B cell (primary cell): ENCODE measurements at regions of chr2 and their contacts with region 1.

Region 1: GRCh38 chr2:42095923-42096408 is 48.1 kb downstream of the PKDCC start:
- DNase-seq: peak; percentile 83
- ATAC-seq: peak; percentile 39
- H3K4me3 ChIP-seq: no peak overlapping the region
- H3K4me3 Mint-ChIP-seq: no peak overlapping the region
- H3K27ac ChIP-seq: no peak overlapping the region
- H3K27ac Mint-ChIP-seq: no peak overlapping the region
- H3K4me1 ChIP-seq: peaks cover 50 to 54% of the 10 kb centered on the region in 2 donors
- H3K4me1 Mint-ChIP-seq: peaks cover 46% of the 10 kb centered on the region
- H3K27me3 ChIP-seq: peaks cover 0 to 4% (median 0%) of the 10 kb centered on the region in 4 experiments
- H3K27me3 Mint-ChIP-seq: no peaks in the 10 kb centered on the region
- CTCF ChIP-seq: peak; percentile 93

Region 2: DNA sequence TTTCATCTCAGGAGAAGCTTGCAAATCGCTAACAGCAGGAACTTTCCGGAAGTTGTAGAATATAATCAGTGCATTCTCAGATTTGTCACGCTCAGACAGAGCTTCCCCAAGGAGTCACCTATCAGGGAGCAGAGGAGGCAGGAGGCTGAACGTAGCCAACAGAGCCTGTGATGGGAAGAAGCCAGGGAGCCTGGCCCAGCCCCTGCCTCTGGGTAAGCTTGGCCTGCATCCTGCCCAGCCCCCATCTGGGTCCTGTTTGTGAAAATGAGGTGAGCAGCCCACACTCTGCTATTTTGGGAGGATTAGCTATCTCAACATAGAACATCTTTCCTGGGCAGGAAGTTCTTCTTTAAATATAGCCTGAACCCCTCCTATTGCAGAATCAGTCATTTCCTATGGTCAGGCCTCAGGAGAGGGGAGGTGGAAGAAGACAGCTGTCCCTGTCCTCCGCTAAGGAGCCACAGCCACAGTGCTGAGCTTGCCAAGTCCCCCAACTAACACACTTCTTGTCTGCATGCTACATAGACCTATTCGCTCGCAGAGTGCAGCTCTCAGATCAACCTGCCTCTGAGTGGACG is 67.3 kb before region 1 on chr2:
- CTCF ChIA-PET with region 1: no interaction called
- POLR2A ChIA-PET with region 1: no interaction called
- intact Hi-C with region 1: no loop called
- DNase-seq: no peak
- ATAC-seq: no peak
- H3K4me3 ChIP-seq: no peak overlapping the region
- H3K4me3 Mint-ChIP-seq: no peak overlapping the region
- H3K27ac ChIP-seq: no peak overlapping the region
- H3K27ac Mint-ChIP-seq: no peak overlapping the region
- H3K4me1 ChIP-seq: peaks cover 13 to 29% of the 10 kb centered on the region in 2 donors
- H3K4me1 Mint-ChIP-seq: peaks cover 23% of the 10 kb centered on the region
- H3K27me3 ChIP-seq: peaks cover 0 to 7% (median 0%) of the 10 kb centered on the region in 4 experiments
- H3K27me3 Mint-ChIP-seq: peaks cover 19% of the 10 kb centered on the region
- CTCF ChIP-seq: no peak

Region 3: GRCh38 chr2:42117923-42118753 is 22.2 kb after region 1 on chr2:
- CTCF ChIA-PET with region 1: interaction called, 25 read pairs
- POLR2A ChIA-PET with region 1: no interaction called
- intact Hi-C with region 1: no loop called
- DNase-seq: peak; percentile 83
- ATAC-seq: peak; percentile 87
- H3K4me3 ChIP-seq: peak overlapping the region in 3 of 5 experiments; percentile 7 to 16 (median 11)
- H3K4me3 Mint-ChIP-seq: peak overlapping the region; percentile 40
- H3K27ac ChIP-seq: peak overlapping the region; percentile 62 to 75
- H3K27ac Mint-ChIP-seq: peak overlapping the region; percentile 69
- H3K4me1 ChIP-seq: peaks cover 48% of the 10 kb centered on the region in 2 donors
- H3K4me1 Mint-ChIP-seq: peaks cover 61% of the 10 kb centered on the region
- H3K27me3 ChIP-seq: no peaks in the 10 kb centered on the region
- H3K27me3 Mint-ChIP-seq: no peaks in the 10 kb centered on the region
- CTCF ChIP-seq: no peak

Region 4: GRCh38 chr2:42132966-42133641 is 37.1 kb after region 1 on chr2:
- CTCF ChIA-PET with region 1: interaction called, 21 read pairs
- POLR2A ChIA-PET with region 1: interaction called, 6 read pairs
- intact Hi-C with region 1: loop called (anchors 1 kb)
- DNase-seq: peak; percentile 89
- ATAC-seq: peak; percentile 90
- H3K4me3 ChIP-seq: peak overlapping the region in 4 of 5 experiments; percentile 2 to 36 (median 15)
- H3K4me3 Mint-ChIP-seq: peak overlapping the region; percentile 81
- H3K27ac ChIP-seq: peak overlapping the region; percentile 71 to 73
- H3K27ac Mint-ChIP-seq: peak overlapping the region; percentile 94
- H3K4me1 ChIP-seq: peaks cover 71% of the 10 kb centered on the region in 2 donors
- H3K4me1 Mint-ChIP-seq: peaks cover 74% of the 10 kb centered on the region
- H3K27me3 ChIP-seq: no peaks in the 10 kb centered on the region
- H3K27me3 Mint-ChIP-seq: no peaks in the 10 kb centered on the region
- CTCF ChIP-seq: no peak

Region 5: GRCh38 chr2:42183775-42184174 is 87.8 kb after region 1 on chr2:
- CTCF ChIA-PET with region 1: interaction called, 23 read pairs
- POLR2A ChIA-PET with region 1: no interaction called
- intact Hi-C with region 1: no loop called
- DNase-seq: no peak
- ATAC-seq: peak; percentile 41
- H3K4me3 ChIP-seq: peak overlapping the region in 1 of 5 experiments; percentile 7
- H3K4me3 Mint-ChIP-seq: peak overlapping the region; percentile 29
- H3K27ac ChIP-seq: peak overlapping the region in 1 of 2 donors; percentile 68
- H3K27ac Mint-ChIP-seq: peak overlapping the region; percentile 63
- H3K4me1 ChIP-seq: peaks cover 34 to 52% of the 10 kb centered on the region in 2 donors
- H3K4me1 Mint-ChIP-seq: peaks cover 67% of the 10 kb centered on the region
- H3K27me3 ChIP-seq: no peaks in the 10 kb centered on the region
- H3K27me3 Mint-ChIP-seq: no peaks in the 10 kb centered on the region
- CTCF ChIP-seq: no peak

Region 6: GRCh38 chr2:42196403-42197267 is 100.7 kb after region 1 on chr2:
- CTCF ChIA-PET with region 1: interaction called, 102 read pairs
- POLR2A ChIA-PET with region 1: interaction called, 4 read pairs
- intact Hi-C with region 1: loop called (anchors 1 kb)
- DNase-seq: peak; percentile 76
- ATAC-seq: peak; percentile 85
- H3K4me3 ChIP-seq: no peak overlapping the region
- H3K4me3 Mint-ChIP-seq: no peak overlapping the region
- H3K27ac ChIP-seq: peak overlapping the region in 1 of 2 donors; percentile 32
- H3K27ac Mint-ChIP-seq: peak overlapping the region; percentile 77
- H3K4me1 ChIP-seq: peaks cover 35 to 46% of the 10 kb centered on the region in 2 donors
- H3K4me1 Mint-ChIP-seq: peaks cover 65% of the 10 kb centered on the region
- H3K27me3 ChIP-seq: no peaks in the 10 kb centered on the region
- H3K27me3 Mint-ChIP-seq: no peaks in the 10 kb centered on the region
- CTCF ChIP-seq: peak; percentile 76

Region 7: DNA sequence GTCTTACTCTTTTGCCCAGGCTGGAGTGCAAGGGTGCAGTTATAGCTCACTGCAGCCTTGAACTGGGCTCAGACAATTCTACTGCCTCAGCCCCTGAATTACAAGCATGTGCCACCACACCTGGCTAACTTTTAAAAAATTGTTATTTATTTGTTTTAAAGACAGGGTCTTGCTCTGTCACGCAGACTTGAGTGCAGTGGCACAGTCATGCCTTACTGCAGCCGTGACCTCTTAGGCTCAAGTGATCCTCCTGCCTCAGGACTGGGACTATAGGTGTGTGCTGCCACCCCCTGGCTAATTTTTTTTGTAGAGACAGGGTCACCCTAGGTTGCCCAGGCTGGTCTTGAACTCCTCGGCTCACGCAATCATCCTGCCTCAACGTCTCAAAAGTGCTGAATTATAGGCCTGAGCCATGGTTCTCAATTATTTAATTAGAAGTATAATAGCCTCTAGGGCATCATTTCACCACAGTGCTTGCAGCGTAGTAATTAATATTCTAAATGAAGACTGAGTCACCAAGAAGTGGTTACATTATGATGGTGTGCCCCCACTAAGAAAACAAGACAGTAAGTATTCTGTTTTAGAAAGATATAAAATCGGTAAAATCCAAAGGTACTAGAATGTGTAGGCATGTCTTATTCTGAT is 142.8 kb after region 1 on chr2:
- CTCF ChIA-PET with region 1: interaction called, 81 read pairs
- POLR2A ChIA-PET with region 1: no interaction called
- intact Hi-C with region 1: loop called (anchors 1 kb)
- DNase-seq: peak; percentile 58
- ATAC-seq: peak; percentile 84
- H3K4me3 ChIP-seq: no peak overlapping the region
- H3K4me3 Mint-ChIP-seq: no peak overlapping the region
- H3K27ac ChIP-seq: no peak overlapping the region
- H3K27ac Mint-ChIP-seq: no peak overlapping the region
- H3K4me1 ChIP-seq: peaks cover 26 to 27% of the 10 kb centered on the region in 2 donors
- H3K4me1 Mint-ChIP-seq: peaks cover 73% of the 10 kb centered on the region
- H3K27me3 ChIP-seq: no peaks in the 10 kb centered on the region
- H3K27me3 Mint-ChIP-seq: no peaks in the 10 kb centered on the region
- CTCF ChIP-seq: peak; percentile 23

Region 8: DNA sequence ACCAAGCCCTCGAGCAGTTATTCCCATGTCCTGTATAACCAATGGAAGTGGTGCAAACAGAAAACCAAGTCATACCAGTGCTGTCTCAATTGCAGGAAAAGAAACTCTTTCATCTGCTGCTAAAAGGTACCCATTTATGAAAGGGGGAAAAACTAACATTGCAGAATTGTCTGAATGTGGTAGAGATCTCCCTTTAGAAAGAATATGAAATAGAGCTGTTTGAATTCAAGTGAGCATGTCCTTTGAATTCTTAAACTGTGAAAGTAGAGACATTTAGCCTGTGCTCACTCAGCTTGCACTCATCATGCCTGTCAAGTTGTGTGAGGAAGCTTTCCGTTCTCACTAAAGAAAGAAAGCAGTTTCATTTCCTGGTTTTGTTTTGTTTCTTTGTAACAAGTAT is 160.5 kb after region 1 on chr2:
- CTCF ChIA-PET with region 1: interaction called, 3 read pairs
- POLR2A ChIA-PET with region 1: no interaction called
- intact Hi-C with region 1: loop called (anchors 5 kb)
- DNase-seq: peak; percentile 61
- ATAC-seq: peak; percentile 78
- H3K4me3 ChIP-seq: no peak overlapping the region
- H3K4me3 Mint-ChIP-seq: peak overlapping the region; percentile 42
- H3K27ac ChIP-seq: peak overlapping the region; percentile 18 to 62
- H3K27ac Mint-ChIP-seq: peak overlapping the region; percentile 59
- H3K4me1 ChIP-seq: peaks cover 19 to 26% of the 10 kb centered on the region in 2 donors
- H3K4me1 Mint-ChIP-seq: peaks cover 49% of the 10 kb centered on the region
- H3K27me3 ChIP-seq: no peaks in the 10 kb centered on the region
- H3K27me3 Mint-ChIP-seq: no peaks in the 10 kb centered on the region
- CTCF ChIP-seq: no peak

Region 9: DNA sequence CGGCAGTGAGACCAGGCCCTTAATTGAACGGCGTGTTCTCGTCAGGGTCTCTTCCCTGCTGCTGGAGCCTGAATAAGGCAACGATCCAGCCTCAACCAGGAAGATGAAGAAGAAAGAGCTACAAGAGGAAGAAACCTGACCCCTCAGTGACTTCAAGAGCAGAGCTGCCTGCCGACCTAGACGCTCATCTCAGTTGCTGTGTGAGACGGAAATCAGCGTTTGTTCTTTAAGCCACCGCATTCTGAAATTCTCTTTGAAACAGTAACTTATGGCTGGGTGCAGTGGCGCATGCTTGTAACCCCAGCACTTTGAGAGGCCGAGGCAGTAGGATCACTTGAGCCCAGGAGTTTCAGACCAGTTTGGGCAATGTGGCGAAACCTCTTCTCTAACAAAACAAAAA is 427.4 kb after region 1 on chr2:
- CTCF ChIA-PET with region 1: no interaction called
- POLR2A ChIA-PET with region 1: no interaction called
- intact Hi-C with region 1: no loop called
- DNase-seq: no peak
- ATAC-seq: no peak
- H3K4me3 ChIP-seq: no peak overlapping the region
- H3K4me3 Mint-ChIP-seq: no peak overlapping the region
- H3K27ac ChIP-seq: no peak overlapping the region
- H3K27ac Mint-ChIP-seq: no peak overlapping the region
- H3K4me1 ChIP-seq: no peaks in the 10 kb centered on the region
- H3K4me1 Mint-ChIP-seq: no peaks in the 10 kb centered on the region
- H3K27me3 ChIP-seq: no peaks in the 10 kb centered on the region
- H3K27me3 Mint-ChIP-seq: no peaks in the 10 kb centered on the region
- CTCF ChIP-seq: no peak